ENCODE measurements at regions of chr5 and their contacts with region 1.

Region 1: DNA sequence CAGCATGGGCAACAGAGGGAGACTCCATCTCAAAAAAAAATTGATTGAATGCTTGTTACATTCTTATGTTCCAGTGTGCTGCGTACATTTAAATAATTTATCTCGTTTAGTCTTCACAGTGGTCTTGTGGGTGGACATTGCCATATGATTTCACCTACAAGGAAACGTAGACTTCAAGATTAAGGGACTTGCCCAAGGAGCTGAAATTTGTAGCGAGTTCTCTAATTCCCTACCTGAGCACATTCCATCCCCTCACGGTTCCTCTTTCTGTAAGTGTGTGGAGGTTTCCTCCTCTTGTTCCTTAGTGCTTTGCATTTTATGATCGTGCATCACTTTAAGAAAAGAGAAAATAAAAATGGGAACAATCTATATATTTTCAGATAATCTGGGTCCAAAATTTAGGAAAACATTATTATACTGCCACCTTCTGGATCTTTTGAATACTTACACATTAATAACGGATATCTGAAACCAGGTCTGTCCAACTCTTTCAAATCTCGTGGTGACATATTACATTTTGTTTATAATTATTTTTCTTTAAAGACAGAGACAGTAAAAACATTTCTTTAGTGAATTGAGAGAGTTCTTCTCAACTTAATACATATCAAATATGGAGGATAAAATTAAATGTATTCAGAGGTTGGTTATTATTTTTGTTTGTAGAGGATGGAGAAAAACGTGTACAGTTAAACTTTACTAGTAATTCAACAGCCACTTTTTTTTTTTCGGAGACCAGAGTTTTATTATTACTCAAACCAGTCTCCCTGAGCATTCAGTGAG is 29.9 kb upstream of the C7 start:
- DNase-seq: peak; percentile 45
- ATAC-seq: peak; percentile 79
- H3K4me3 ChIP-seq: no peak overlapping the region
- H3K27ac ChIP-seq: no peak overlapping the region
- H3K4me1 ChIP-seq: no peaks in the 10 kb centered on the region
- H3K27me3 ChIP-seq: no peaks in the 10 kb centered on the region; the same call in 1 of the 2 replicates
- CTCF ChIP-seq: peak; percentile 60
- POLR2A ChIP-seq: no peak
- RAD21 ChIP-seq: peak; percentile 61

Region 2: GRCh38 chr5:39578887-39579497 is 1300.4 kb before region 1 on chr5:
- CTCF ChIA-PET with region 1: interaction called, 3 read pairs
- POLR2A ChIA-PET with region 1: no interaction called
- dilution Hi-C with region 1: no loop called
- in situ Hi-C with region 1: loop called (anchors 10 kb)
- intact Hi-C with region 1: loop called (anchors 5 kb)
- DNase-seq: peak; percentile 49
- ATAC-seq: no peak
- H3K4me3 ChIP-seq: no peak overlapping the region
- H3K27ac ChIP-seq: no peak overlapping the region
- H3K4me1 ChIP-seq: no peaks in the 10 kb centered on the region
- H3K27me3 ChIP-seq: peaks cover 7% of the 10 kb centered on the region
- CTCF ChIP-seq: peak; percentile 61
- POLR2A ChIP-seq: no peak
- RAD21 ChIP-seq: peak; percentile 64

Region 3: DNA sequence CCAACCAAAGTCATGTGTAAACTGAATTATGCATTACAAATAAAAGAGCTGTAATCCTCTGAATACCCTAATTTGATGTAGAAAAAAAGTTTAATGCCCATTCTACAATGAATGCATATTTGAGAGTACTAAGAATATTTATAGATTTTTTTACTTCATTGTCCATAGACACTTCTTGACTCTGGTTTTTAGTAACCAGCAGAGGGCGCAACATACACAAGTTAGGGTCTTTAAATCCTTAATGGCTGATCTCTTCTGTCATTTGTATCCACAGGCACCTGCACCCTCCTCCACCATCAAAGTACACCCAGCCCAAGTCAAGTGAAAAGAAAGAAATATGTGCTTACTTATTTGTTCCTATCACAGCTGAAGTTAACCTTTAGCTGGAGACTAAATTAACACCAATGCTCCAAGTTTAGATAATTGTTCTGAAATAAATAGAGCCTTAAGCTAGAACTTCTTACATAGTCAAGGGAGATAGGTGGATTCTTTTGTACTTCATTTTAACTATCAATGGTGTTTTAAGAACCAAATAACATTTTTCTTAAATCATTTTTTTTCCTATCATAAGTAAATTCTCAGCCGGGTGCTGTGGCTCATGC is 930.4 kb before region 1 on chr5:
- CTCF ChIA-PET with region 1: no interaction called
- POLR2A ChIA-PET with region 1: no interaction called
- dilution Hi-C with region 1: no loop called
- in situ Hi-C with region 1: loop called (anchors 10 kb)
- intact Hi-C with region 1: no loop called
- DNase-seq: peak; percentile 76
- ATAC-seq: peak; percentile 77
- H3K4me3 ChIP-seq: no peak overlapping the region
- H3K27ac ChIP-seq: no peak overlapping the region
- H3K4me1 ChIP-seq: no peaks in the 10 kb centered on the region
- H3K27me3 ChIP-seq: no peaks in the 10 kb centered on the region
- CTCF ChIP-seq: peak; percentile 70
- POLR2A ChIP-seq: no peak
- RAD21 ChIP-seq: peak; percentile 78

Region 4: DNA sequence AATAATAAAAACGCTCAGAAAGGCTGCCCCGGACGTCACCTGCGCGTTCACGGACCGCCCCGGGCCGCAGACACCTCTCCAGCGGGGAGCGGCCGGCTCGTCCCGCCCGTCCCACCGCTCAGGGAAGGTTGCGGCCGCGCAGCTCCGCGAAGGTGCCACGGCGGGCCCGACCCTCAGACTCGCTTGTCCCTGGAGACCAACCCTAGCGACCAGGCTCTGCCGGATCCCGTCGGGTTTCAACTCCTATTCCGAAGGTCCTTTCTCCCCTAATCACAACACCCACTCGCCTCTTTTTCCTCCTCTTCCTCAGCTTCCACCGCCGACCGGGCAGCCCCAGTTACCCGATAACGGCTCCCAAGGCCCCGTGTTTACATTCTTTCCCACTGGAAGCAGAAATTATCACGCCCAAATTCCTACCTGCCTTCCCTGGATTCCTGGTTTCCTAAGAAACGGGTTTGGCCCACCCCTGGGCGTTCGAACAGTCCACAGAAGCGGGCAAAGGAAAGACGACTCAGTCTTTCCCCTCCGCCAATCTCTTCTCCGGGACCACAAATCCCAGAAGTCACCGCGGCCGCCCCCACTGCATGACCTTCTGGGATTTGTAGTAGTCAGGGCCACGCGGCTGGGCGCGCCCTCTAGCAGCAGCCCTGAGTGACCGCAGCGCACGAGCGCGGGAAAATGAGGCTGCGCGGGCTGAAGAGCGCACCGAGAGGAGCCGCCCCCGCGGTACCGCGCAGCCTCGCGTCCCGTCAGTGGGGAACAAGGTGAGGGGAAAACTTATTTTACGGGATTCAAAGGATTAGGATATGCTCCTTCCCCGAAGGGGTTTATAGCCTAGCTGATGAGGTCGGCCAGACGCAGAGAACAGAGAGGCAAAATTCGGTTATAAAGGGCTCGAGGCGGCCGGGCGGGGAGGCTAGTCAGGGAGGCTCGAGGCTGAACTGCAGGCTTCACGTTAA is 123.7 kb before region 1 on chr5 and contains the start of gene TTC33:
- CTCF ChIA-PET with region 1: no interaction called
- POLR2A ChIA-PET with region 1: no interaction called
- dilution Hi-C with region 1: no loop called
- in situ Hi-C with region 1: no loop called
- intact Hi-C with region 1: loop called (anchors 1 kb)
- DNase-seq: peak; percentile 93
- ATAC-seq: peak; percentile 91
- H3K4me3 ChIP-seq: peak within 1 kb of the TSS; percentile 92
- H3K27ac ChIP-seq: peak within 1 kb of the TSS; percentile 88
- H3K4me1 ChIP-seq: peaks cover 4% of the 10 kb centered on the region; the same call in 1 of the 2 replicates
- H3K27me3 ChIP-seq: no peaks in the 10 kb centered on the region
- CTCF ChIP-seq: peak; percentile 80
- POLR2A ChIP-seq: peak; percentile 27; the same call in 1 of the 2 replicates
- RAD21 ChIP-seq: peak; percentile 38; the same call in 1 of the 2 replicates
- total RNA-seq, gene TTC33: 8.1 and 11.7 TPM in 2 replicates

Region 5: DNA sequence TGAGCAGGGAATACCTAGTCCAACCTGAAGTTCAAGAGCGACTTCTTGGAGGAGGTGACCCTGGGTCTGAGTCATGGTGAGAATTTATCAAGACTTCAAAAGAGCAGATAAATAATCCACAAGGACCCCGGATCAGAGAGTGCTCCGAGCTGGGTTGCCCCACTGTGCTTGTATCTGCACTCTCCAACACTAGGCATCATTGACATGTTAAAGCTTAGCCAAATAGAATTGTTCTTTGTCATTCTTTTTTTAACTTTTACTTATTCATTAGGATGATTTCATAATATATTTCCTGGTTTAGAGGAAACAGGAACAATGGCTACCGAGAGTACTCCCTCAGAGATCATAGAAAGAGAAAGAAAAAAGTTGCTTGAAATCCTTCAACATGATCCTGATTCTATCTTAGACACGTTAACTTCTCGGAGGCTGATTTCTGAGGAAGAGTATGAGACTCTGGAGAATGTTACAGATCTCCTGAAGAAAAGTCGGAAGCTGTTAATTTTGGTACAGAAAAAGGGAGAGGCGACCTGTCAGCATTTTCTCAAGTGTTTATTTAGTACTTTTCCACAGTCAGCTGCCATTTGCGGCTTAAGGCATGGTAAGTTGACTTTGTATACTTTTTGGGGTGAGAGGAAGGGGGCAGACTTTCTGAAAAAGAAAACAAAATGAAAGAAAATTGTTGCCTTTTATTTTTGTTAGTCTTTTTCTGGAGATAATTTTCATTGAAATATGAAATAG is 38.1 kb before region 1 on chr5 and contains the start of gene CARD6:
- CTCF ChIA-PET with region 1: no interaction called
- POLR2A ChIA-PET with region 1: no interaction called
- dilution Hi-C with region 1: no loop called
- in situ Hi-C with region 1: no loop called
- intact Hi-C with region 1: loop called (anchors 5 kb)
- DNase-seq: peak; percentile 31
- ATAC-seq: peak; percentile 56
- H3K4me3 ChIP-seq: peak within 1 kb of the TSS; percentile 45
- H3K27ac ChIP-seq: peak within 1 kb of the TSS; percentile 87
- H3K4me1 ChIP-seq: 0 out of 2 replicates have a peak, but pooled peaks cover 2% of the 10 kb centered on the region
- H3K27me3 ChIP-seq: no peaks in the 10 kb centered on the region
- CTCF ChIP-seq: no peak
- POLR2A ChIP-seq: no peak
- RAD21 ChIP-seq: no peak
- total RNA-seq, gene CARD6: 4.2 and 4.3 TPM in 2 replicates